HEK293 (cell line): ENCODE measurements at regions of chr9 and their contacts with region 1.

Region 1: DNA sequence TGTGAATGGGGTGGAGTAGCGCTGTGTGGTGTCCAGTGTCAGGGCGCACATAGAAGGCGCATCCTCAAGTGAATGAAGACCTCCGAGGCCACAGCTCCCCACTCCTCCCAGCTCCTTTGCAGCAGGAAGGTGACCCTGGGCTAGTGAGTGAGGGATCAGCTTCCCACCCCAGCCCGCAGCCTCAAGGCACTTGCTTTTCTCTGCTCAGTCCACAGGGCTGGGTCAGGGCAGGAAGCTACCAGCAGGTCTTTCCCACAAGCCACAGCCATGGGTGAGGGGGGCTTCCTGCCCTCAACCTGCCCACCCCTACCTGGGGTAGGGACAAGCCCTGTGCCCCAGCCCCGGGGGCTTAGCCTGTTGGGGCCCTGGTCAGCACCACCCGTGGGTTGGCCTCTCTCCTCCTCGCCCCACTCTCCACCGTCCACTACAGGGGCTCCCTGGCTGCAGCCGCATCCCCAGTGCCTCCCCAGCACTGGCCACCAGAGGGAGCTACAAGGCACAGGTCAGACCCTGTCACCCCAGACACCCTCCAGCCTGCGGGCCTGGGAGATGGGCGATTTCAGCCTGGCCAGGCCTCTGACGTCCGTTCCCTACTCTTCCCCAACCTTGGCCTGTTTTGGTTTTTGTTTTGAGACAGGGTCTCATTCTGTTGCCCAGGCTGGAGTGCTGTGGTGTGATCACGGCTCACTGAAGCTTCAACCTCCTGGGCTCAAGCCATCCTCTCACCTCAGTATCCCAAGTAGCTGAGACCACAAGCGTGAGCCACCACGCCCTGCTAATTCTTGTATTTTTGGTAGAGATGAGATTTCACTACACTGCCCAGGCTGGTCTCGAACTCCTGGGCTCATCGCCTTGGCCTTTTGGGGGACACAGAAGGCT is 1.3 kb upstream of the ABCA2 start:
- H3K4me3 ChIP-seq: no peak overlapping the region
- H3K27ac ChIP-seq: no peak overlapping the region
- H3K4me1 ChIP-seq: peaks cover 2% of the 10 kb centered on the region; the same call in 1 of the 2 replicates
- CTCF ChIP-seq: peak; percentile 94

Region 2: DNA sequence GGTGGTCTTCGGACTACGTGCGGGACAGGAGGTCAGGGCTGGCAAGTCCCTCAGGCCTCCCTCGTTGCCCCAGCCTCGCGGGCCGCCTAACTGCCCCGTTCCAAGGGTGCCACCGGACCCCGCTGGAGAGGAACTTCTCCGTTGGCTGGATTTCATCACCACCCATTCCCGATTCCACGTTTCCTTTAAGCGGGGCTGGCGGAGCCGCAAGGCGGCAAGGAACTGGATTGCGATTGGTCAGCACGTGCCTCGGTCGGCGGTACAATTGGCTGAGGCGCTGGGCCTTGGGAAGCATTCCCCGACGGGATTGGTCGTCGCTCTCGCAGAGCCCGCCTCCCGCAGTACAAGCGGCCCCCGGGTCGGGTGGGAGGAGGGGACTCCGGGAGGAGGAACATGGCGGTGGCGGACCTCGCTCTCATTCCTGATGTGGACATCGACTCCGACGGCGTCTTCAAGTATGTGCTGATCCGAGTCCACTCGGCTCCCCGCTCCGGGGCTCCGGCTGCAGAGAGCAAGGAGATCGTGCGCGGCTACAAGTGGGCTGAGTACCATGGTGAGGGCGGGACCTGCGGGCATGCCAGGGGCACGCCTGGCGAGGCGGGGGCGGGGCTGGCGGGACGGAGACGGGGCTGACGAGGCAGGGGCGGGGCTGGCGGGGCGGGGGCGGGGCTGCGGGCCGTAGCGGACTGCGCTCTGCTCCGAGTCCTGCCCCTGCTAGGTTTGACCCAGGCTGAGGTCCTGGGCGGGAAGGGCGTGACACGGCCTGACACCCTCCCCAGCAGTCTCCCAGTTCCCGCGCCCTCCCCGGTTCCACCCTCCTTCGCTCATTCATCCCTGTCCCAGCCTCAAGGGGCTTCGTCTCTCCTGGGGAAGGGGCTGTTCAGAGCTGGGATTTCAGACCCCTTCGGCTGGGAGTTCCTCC is 180.0 kb before region 1 on chr9 and contains the start of gene PHPT1:
- CTCF ChIA-PET with region 1: interaction called, 27 read pairs
- POLR2A ChIA-PET with region 1: interaction called, 3 read pairs
- H3K4me3 ChIP-seq: peak within 1 kb of the TSS; percentile 86
- H3K27ac ChIP-seq: peak within 1 kb of the TSS; percentile 94
- H3K4me1 ChIP-seq: 0 out of 2 replicates have a peak, but pooled peaks cover 4% of the 10 kb centered on the region
- CTCF ChIP-seq: no peak

Region 3: DNA sequence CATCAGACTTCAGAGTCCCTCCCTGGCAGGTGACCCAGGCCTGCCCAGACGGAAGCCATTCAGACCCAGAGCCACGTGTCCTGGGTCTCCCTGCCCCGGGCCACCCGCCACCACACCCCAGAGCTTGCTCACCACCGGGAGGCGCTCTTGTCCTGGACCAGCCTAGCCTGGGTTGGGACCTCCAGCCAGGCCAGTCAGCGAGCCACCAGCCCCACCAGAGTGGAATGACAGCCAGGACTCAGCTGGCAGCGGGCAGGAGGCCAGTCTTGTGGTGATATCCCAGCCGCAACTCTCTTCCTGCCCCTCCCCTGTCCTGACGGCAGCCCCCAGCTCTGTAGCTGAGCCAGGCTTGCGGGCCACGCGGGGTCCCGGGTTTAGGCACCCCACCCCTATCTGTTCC is 53.7 kb before region 1 on chr9:
- CTCF ChIA-PET with region 1: interaction called, 16 read pairs
- POLR2A ChIA-PET with region 1: interaction called, 4 read pairs
- H3K4me3 ChIP-seq: no peak overlapping the region
- H3K27ac ChIP-seq: no peak overlapping the region
- H3K4me1 ChIP-seq: no peaks in the 10 kb centered on the region
- CTCF ChIP-seq: 0 out of 2 replicates have a peak, but pooled peaks have one; percentile 16

Region 4: GRCh38 chr9:137007108-137007815 is 22.0 kb before region 1 on chr9:
- CTCF ChIA-PET with region 1: interaction called, 38 read pairs
- POLR2A ChIA-PET with region 1: interaction called, 3 read pairs
- H3K4me3 ChIP-seq: no peak overlapping the region
- H3K27ac ChIP-seq: no peak overlapping the region
- H3K4me1 ChIP-seq: peaks cover 3% of the 10 kb centered on the region; the same call in 1 of the 2 replicates
- CTCF ChIP-seq: no peak

Region 5: GRCh38 chr9:137070201-137070905 is 41.1 kb after region 1 on chr9 and contains the start of gene SAPCD2:
- CTCF ChIA-PET with region 1: interaction called, 86 read pairs
- POLR2A ChIA-PET with region 1: interaction called, 3 read pairs
- H3K4me3 ChIP-seq: peak within 1 kb of the TSS; percentile 38
- H3K27ac ChIP-seq: peak within 1 kb of the TSS; percentile 71
- H3K4me1 ChIP-seq: peaks cover 10% of the 10 kb centered on the region; the same call in 1 of the 2 replicates
- CTCF ChIP-seq: no peak